ENCODE measurements at regions of chr4 and their contacts with region 1.

Region 1: GRCh38 chr4:15882675-15883086 is 55.9 kb downstream of the FGFBP1 start:
- DNase-seq: peak; percentile 64
- ATAC-seq: peak; percentile 97
- H3K4me3 ChIP-seq: no peak overlapping the region
- H3K27ac ChIP-seq: no peak overlapping the region
- H3K4me1 ChIP-seq: no peaks in the 10 kb centered on the region
- H3K27me3 ChIP-seq: no peaks in the 10 kb centered on the region
- CTCF ChIP-seq: peak; percentile 88 to 91 (median 89)
- EP300 ChIP-seq: no peak
- POLR2A ChIP-seq: no peak
- RAD21 ChIP-seq: peak; percentile 81

Region 2: DNA sequence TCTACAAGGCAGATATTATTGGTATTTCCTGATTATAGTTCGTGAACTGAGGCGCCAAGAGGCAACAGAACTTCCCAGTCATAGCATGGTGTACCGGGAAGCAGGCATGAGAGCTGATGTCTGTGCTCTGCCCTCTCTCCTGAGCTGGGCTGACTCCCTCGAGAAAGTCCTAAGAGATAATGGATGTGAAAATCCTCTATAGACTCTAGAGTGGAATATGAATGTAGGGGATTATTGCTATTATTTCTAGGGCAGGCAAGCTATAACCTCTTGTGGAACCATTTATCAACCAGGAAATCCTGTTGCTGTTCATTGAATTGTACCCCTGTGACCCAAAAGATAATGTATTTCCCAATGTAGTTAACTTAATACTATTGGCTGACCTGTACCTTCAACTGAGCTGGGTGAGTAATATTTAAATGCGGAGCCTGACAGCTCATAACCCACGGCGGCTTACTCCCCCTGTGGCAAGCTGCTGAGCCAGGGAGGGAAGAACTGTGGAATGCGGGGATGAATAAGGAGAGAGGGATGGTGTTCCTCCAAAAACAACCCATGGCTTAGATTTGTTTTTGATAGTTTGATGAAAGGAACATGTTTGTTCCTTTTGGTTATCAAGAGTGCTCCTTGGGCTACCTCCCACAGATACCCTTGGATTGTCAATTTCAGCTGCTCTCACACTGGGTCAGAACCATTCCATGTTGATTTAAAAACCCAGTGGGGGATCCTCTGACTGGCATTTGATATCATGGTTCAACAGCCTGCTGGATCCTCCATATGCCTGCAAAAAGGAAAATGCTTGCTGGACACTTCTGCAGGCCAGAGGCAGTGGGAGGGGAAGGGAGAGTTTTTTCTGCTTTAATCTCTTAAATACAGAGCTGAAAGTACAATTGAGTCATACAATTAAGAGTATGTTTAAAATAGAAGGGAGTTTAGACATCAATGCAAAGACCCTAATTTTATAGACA is 1916.2 kb before region 1 on chr4:
- CTCF ChIA-PET with region 1: no interaction called
- POLR2A ChIA-PET with region 1: no interaction called
- RAD21 ChIA-PET with region 1: no interaction called
- SMC1A ChIA-PET with region 1: no interaction called
- in situ Hi-C with region 1: no loop called
- intact Hi-C with region 1: no loop called
- DNase-seq: no peak
- ATAC-seq: no peak
- H3K4me3 ChIP-seq: no peak overlapping the region
- H3K27ac ChIP-seq: no peak overlapping the region
- H3K4me1 ChIP-seq: no peaks in the 10 kb centered on the region
- H3K27me3 ChIP-seq: no peaks in the 10 kb centered on the region
- CTCF ChIP-seq: no peak
- EP300 ChIP-seq: no peak
- POLR2A ChIP-seq: no peak
- RAD21 ChIP-seq: no peak

Region 3: GRCh38 chr4:15738877-15739276 is 143.8 kb before region 1 on chr4:
- CTCF ChIA-PET with region 1: interaction called, 12 read pairs
- POLR2A ChIA-PET with region 1: no interaction called
- RAD21 ChIA-PET with region 1: interaction called, 3 read pairs
- SMC1A ChIA-PET with region 1: interaction called, 11 read pairs
- in situ Hi-C with region 1: no loop called
- intact Hi-C with region 1: no loop called
- DNase-seq: no peak
- ATAC-seq: no peak
- H3K4me3 ChIP-seq: no peak overlapping the region
- H3K27ac ChIP-seq: no peak overlapping the region
- H3K4me1 ChIP-seq: no peaks in the 10 kb centered on the region
- H3K27me3 ChIP-seq: no peaks in the 10 kb centered on the region; a peak in 1 of 4 replicates
- CTCF ChIP-seq: no peak
- EP300 ChIP-seq: no peak
- POLR2A ChIP-seq: no peak
- RAD21 ChIP-seq: no peak

Region 4: GRCh38 chr4:15784959-15785634 is 97.6 kb before region 1 on chr4:
- CTCF ChIA-PET with region 1: interaction called, 9 read pairs
- POLR2A ChIA-PET with region 1: no interaction called
- RAD21 ChIA-PET with region 1: interaction called, 10 read pairs
- SMC1A ChIA-PET with region 1: interaction called, 12 read pairs
- in situ Hi-C with region 1: no loop called
- intact Hi-C with region 1: no loop called
- DNase-seq: no peak
- ATAC-seq: peak; percentile 66
- H3K4me3 ChIP-seq: no peak overlapping the region
- H3K27ac ChIP-seq: no peak overlapping the region
- H3K4me1 ChIP-seq: peaks cover 43% of the 10 kb centered on the region
- H3K27me3 ChIP-seq: no peaks in the 10 kb centered on the region
- CTCF ChIP-seq: no peak
- EP300 ChIP-seq: peak; percentile 62 to 81; a peak in 3 of 4 replicates
- POLR2A ChIP-seq: no peak
- RAD21 ChIP-seq: no peak

Region 5: GRCh38 chr4:15855804-15856475 is 26.7 kb before region 1 on chr4:
- CTCF ChIA-PET with region 1: interaction called, 10 read pairs
- POLR2A ChIA-PET with region 1: no interaction called
- RAD21 ChIA-PET with region 1: interaction called, 5 read pairs
- SMC1A ChIA-PET with region 1: interaction called, 5 read pairs
- in situ Hi-C with region 1: no loop called
- intact Hi-C with region 1: no loop called
- DNase-seq: no peak
- ATAC-seq: no peak
- H3K4me3 ChIP-seq: no peak overlapping the region
- H3K27ac ChIP-seq: no peak overlapping the region
- H3K4me1 ChIP-seq: no peaks in the 10 kb centered on the region
- H3K27me3 ChIP-seq: no peaks in the 10 kb centered on the region
- CTCF ChIP-seq: no peak
- EP300 ChIP-seq: no peak
- POLR2A ChIP-seq: no peak
- RAD21 ChIP-seq: no peak

Region 6: DNA sequence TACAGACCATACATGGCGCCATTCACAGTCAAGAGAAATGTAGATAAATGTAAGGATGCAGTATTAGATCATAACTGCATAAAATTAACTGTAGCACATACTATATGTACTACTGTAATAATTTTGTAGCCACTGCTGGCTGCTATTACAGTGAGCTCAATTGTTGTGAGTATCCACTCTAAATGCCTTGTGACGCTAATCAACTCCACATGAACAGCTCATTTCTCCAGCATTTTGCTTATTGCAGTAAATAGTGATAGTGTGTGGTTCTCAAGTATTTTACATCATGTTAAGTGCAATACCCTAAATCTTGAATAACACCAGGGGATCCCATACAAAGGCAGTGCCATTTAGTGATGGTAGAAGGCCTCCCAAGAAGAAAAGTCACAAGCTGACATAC is 34.6 kb after region 1 on chr4:
- CTCF ChIA-PET with region 1: interaction called, 10 read pairs
- POLR2A ChIA-PET with region 1: no interaction called
- RAD21 ChIA-PET with region 1: interaction called, 3 read pairs
- SMC1A ChIA-PET with region 1: interaction called, 5 read pairs
- in situ Hi-C with region 1: no loop called
- intact Hi-C with region 1: no loop called
- DNase-seq: no peak
- ATAC-seq: no peak
- H3K4me3 ChIP-seq: no peak overlapping the region
- H3K27ac ChIP-seq: no peak overlapping the region
- H3K4me1 ChIP-seq: no peaks in the 10 kb centered on the region
- H3K27me3 ChIP-seq: peaks cover 0 to 1% of the 10 kb centered on the region in 2 experiments; a peak in 2 of 4 replicates
- CTCF ChIP-seq: no peak
- EP300 ChIP-seq: no peak
- POLR2A ChIP-seq: no peak
- RAD21 ChIP-seq: no peak

Region 7: GRCh38 chr4:16001484-16001858 is 118.8 kb after region 1 on chr4:
- CTCF ChIA-PET with region 1: interaction called, 54 read pairs
- POLR2A ChIA-PET with region 1: no interaction called
- RAD21 ChIA-PET with region 1: interaction called, 17 read pairs
- SMC1A ChIA-PET with region 1: interaction called, 28 read pairs
- in situ Hi-C with region 1: loop called (anchors 5 kb)
- intact Hi-C with region 1: loop called (anchors 1 kb)
- DNase-seq: peak; percentile 13
- ATAC-seq: peak; percentile 98
- H3K4me3 ChIP-seq: no peak overlapping the region
- H3K27ac ChIP-seq: no peak overlapping the region
- H3K4me1 ChIP-seq: no peaks in the 10 kb centered on the region
- H3K27me3 ChIP-seq: no peaks in the 10 kb centered on the region
- CTCF ChIP-seq: peak; percentile 87 to 90 (median 87)
- EP300 ChIP-seq: no peak
- POLR2A ChIP-seq: no peak
- RAD21 ChIP-seq: peak; percentile 91

Region 8: DNA sequence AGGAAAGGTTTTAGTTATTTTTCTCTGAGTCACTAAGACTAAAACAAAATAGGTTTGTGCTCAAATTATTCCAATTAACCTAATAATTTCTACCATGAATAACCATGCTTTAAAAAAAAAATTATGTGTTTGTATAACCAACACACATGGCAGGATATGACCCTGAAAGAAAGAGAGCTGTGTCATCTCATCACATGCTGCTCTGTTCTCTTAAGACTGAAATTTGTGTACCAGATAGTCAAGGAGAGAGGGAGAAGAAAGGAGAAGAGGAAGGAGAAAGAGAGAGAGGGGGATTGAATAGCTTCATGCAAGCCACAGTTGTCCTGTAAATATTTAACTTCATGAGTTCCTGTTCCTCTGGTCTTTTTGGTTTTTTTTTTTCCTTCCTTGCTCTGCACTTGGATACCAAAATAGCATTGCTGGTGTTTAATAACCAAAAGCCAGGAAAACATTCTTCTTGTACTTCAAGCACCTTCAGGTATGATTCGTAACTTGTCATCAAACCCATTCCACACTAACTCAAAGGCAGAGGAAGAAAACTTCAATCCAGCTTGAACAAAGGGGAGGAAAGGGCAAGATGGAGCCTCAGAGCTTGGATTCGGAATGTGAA is 207.5 kb after region 1 on chr4:
- CTCF ChIA-PET with region 1: no interaction called
- POLR2A ChIA-PET with region 1: no interaction called
- RAD21 ChIA-PET with region 1: no interaction called
- SMC1A ChIA-PET with region 1: no interaction called
- in situ Hi-C with region 1: no loop called
- intact Hi-C with region 1: no loop called
- DNase-seq: no peak
- ATAC-seq: no peak
- H3K4me3 ChIP-seq: no peak overlapping the region
- H3K27ac ChIP-seq: no peak overlapping the region
- H3K4me1 ChIP-seq: peaks cover 3% of the 10 kb centered on the region; the same call in 1 of the 2 replicates
- H3K27me3 ChIP-seq: no peaks in the 10 kb centered on the region; a peak in 2 of 4 replicates
- CTCF ChIP-seq: no peak
- EP300 ChIP-seq: no peak
- POLR2A ChIP-seq: no peak
- RAD21 ChIP-seq: no peak

Measured in GM12878 (cell line).